GM10248 (cell line): ENCODE measurements at regions of chr3 and their contacts with region 1.

Region 1: GRCh38 chr3:38154033-38154494 is 11.3 kb upstream of the OXSR1 start:
- DNase-seq: no peak
- CTCF ChIP-seq: no peak

Region 2: GRCh38 chr3:38136777-38137614 is 17.1 kb before region 1 on chr3 and contains the start of gene ACAA1:
- CTCF ChIA-PET with region 1: interaction called, 14 read pairs
- POLR2A ChIA-PET with region 1: interaction called, 3 read pairs
- DNase-seq: peak; percentile 98
- CTCF ChIP-seq: no peak

Region 3: GRCh38 chr3:38186781-38187180 is 32.7 kb after region 1 on chr3:
- CTCF ChIA-PET with region 1: no interaction called
- POLR2A ChIA-PET with region 1: no interaction called
- DNase-seq: no peak
- CTCF ChIP-seq: no peak